Activated CD8-positive, alpha-beta memory T cell treated with anti-CD3 and anti-CD28 coated beads, Interleukin-2, amount 10 ng/mL, durations not matched to agents 7 days and 5 days (primary cell): ENCODE measurements at regions of chr1 and their contacts with region 1.

Region 1: GRCh38 chr1:145845514-145846161 is at the start of gene NUDT17:
- DNase-seq: peak; percentile 84
- ATAC-seq: peak; percentile 87
- H3K4me3 Mint-ChIP-seq: no peak within 1 kb of the TSS
- H3K27ac Mint-ChIP-seq: no peak within 1 kb of the TSS
- H3K4me1 Mint-ChIP-seq: peaks cover 9% of the 10 kb centered on the region
- H3K27me3 Mint-ChIP-seq: no peaks in the 10 kb centered on the region
- total RNA-seq, gene NUDT17: 2.8 to 4.1 TPM

Region 2: DNA sequence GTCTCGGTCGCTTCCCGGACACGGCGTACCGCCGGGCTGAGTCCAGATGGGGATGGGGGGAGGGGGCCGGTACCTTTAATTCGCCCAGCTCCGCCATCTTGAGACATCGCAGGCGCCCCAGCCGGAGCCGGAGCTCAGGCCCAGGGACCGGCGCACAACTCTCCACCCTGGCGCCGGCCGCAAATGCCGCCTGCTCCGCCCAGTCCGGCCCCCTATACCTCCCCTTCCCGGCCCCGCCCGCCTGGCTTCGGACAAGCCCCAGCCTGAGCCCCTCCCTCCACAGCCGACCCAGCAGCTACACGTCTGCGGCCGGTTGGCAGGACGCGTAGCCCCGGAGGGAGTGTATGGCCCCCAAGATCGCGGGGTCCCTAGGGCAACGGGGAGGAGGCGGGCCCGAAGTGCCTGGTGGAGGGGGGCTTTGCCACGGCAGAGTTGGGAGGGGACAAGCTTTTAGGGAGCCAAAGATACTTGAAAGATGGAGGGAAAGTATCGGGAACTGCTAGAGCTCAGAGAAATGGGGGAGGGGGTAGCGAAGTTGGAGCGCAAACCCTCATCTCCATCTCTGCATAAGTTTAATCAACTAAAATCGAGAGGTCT is 13.4 kb after region 1 on chr1 and contains the start of gene PIAS3:
- CTCF ChIA-PET with region 1: interaction called, 229 read pairs
- DNase-seq: peak; percentile 94
- ATAC-seq: peak; percentile 87
- H3K4me3 Mint-ChIP-seq: peak within 1 kb of the TSS; percentile 95
- H3K27ac Mint-ChIP-seq: peak within 1 kb of the TSS; percentile 87
- H3K4me1 Mint-ChIP-seq: peaks cover 10% of the 10 kb centered on the region
- H3K27me3 Mint-ChIP-seq: peaks cover 8% of the 10 kb centered on the region
- total RNA-seq, gene PIAS3: 20.3 to 23.6 TPM

Region 3: GRCh38 chr1:145879775-145880174 is 34.1 kb after region 1 on chr1:
- CTCF ChIA-PET with region 1: interaction called, 83 read pairs
- DNase-seq: no peak
- ATAC-seq: no peak
- H3K4me3 Mint-ChIP-seq: no peak overlapping the region
- H3K27ac Mint-ChIP-seq: no peak overlapping the region
- H3K4me1 Mint-ChIP-seq: peaks cover 5% of the 10 kb centered on the region
- H3K27me3 Mint-ChIP-seq: peaks cover 47% of the 10 kb centered on the region

Region 4: GRCh38 chr1:145891587-145892485 is 46.2 kb after region 1 on chr1:
- CTCF ChIA-PET with region 1: interaction called, 31 read pairs
- DNase-seq: peak; percentile 73
- ATAC-seq: peak; percentile 85
- H3K4me3 Mint-ChIP-seq: no peak overlapping the region
- H3K27ac Mint-ChIP-seq: no peak overlapping the region
- H3K4me1 Mint-ChIP-seq: peaks cover under 1% of the 10 kb centered on the region
- H3K27me3 Mint-ChIP-seq: peaks cover 4% of the 10 kb centered on the region

Region 5: DNA sequence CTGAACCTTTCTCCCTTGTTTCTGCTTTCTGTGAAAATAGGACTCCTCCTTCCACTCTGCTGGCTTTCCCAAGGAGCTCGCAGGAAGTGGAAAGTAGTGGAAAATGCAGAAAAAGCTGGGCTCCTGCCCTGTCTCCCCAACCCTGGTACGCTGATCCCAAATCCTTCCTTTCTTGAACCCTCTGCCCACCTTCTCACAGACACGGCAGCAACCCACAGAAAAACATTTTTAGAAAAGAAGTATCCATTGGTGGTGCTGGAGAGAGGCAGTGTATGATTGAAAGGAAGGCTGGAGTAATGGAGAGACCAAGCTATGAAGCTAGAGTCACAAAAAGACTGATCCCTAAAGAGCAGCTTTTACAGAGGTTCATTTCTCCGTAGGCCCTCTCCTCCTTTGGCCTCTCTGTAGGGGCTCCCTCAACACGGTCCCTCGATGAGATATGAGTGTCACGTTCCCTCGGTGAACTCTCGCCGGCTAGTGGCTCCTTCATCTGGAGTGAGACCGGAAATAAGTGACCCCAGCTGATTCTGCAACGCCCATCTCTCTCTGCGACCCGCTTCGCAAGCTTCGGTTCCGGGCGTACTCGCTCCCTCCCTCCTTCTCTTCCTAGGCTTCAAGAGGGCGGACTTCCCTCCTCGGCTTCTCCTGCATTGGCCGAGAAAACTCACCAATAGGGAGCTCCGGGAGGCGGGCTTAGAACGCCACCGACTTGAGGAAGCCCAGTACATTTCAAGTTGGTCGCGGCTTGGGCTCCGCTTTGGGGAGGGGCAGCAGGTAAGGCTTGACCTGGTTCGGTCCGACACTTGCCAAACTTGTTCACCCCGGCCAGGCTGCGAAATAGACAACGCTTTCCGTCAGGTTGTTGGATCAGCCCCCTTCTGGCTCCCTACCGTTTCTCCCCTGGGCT is 118.6 kb after region 1 on chr1 and contains the starts of genes ANKRD34A and POLR3GL:
- CTCF ChIA-PET with region 1: interaction called, 10 read pairs
- DNase-seq: peak; percentile 97
- ATAC-seq: peak; percentile 93
- H3K4me3 Mint-ChIP-seq: peak within 1 kb of the TSS; percentile 86
- H3K27ac Mint-ChIP-seq: peak within 1 kb of the TSS; percentile 91
- H3K4me1 Mint-ChIP-seq: peaks cover 52% of the 10 kb centered on the region
- H3K27me3 Mint-ChIP-seq: no peaks in the 10 kb centered on the region
- total RNA-seq, gene ANKRD34A: 3.8 to 4.6 TPM
- total RNA-seq, gene POLR3GL: 23.5 to 29.1 TPM

Region 6: DNA sequence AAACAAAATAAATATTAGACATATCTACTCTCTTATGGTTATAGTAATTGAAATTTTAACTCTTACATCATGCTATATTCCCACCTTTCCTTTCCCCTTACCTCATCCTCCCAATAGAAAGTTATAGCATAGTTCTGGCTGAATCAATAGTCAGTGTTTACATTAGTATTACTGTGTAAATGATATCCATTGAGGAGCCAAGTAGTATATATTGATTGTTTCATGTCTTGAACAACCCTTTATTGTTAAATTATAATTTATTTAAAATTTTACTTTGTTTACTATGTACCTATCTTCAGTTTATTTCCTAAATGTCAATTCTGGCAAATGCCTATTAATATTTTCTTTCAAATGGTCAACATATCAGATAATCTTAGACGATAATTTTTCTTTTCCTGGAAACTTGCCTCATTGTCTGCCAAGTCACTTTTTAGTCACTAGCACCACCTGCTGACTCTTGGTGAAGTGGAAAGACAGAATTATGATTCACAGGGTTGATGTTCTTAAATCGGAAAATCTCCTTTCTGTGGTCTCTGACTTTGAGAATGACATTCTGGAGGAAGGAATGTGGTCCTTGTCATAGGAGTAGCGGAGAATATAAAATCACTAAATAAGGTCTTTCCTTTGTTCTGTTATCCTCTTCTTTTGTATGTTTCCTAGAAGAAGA is 167.2 kb after region 1 on chr1:
- CTCF ChIA-PET with region 1: interaction called, 168 read pairs
- DNase-seq: peak; percentile 75
- ATAC-seq: peak; percentile 81
- H3K4me3 Mint-ChIP-seq: no peak overlapping the region
- H3K27ac Mint-ChIP-seq: no peak overlapping the region
- H3K4me1 Mint-ChIP-seq: peaks cover 6% of the 10 kb centered on the region
- H3K27me3 Mint-ChIP-seq: peaks cover 28% of the 10 kb centered on the region